GM10248 (cell line): ENCODE measurements at regions of chr12 and their contacts with region 1.

Region 1: DNA sequence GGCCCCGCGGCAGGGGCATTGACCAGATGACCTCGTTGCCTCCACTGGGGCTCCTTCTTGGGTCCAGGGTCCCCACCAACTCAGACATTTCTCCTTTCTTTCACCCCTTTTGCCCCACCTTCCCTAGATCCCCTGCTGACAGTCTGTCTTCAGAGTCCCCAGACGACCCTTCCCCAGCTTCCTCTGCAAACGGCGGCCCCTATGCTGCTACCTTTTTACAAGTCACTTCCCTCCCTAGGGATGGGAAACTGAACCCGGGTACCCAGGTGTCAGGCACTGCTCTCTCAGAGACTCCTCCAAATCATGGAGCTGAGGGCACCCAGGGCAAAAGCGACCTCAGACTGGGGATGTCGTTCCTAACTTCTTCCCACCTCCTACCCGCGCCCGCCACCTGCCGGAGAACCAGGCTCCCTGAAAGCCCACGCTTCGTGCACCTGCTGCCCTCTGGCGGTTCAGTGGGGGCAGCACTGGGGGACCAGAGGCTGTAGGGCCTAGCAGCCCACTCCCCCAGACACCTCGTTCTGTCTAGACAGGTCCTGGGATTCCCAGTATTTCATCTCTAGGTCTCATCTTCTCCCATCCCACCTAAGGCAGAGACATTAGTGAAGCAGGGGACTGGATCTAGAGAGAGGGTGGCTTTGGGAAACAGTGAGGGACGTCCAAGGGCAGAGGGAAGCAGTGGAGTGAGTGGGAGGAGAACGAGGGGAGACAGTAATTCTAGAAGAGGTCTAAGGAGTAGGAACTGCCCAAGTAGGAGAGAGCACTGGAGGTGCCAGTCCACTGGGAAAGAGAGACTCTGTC is 4.9 kb downstream of the ZNF385A start:
- DNase-seq: peak; percentile 93
- CTCF ChIP-seq: peak; percentile 100

Region 2: GRCh38 chr12:53984901-53985709 is 394.5 kb before region 1 on chr12 and contains the start of gene HOXC10:
- CTCF ChIA-PET with region 1: no interaction called
- POLR2A ChIA-PET with region 1: no interaction called
- DNase-seq: peak; percentile 87
- CTCF ChIP-seq: peak; percentile 71

Region 3: GRCh38 chr12:54207484-54208294 is 171.9 kb before region 1 on chr12:
- CTCF ChIA-PET with region 1: interaction called, 13 read pairs
- POLR2A ChIA-PET with region 1: no interaction called
- DNase-seq: peak; percentile 84
- CTCF ChIP-seq: peak; percentile 99

Region 4: DNA sequence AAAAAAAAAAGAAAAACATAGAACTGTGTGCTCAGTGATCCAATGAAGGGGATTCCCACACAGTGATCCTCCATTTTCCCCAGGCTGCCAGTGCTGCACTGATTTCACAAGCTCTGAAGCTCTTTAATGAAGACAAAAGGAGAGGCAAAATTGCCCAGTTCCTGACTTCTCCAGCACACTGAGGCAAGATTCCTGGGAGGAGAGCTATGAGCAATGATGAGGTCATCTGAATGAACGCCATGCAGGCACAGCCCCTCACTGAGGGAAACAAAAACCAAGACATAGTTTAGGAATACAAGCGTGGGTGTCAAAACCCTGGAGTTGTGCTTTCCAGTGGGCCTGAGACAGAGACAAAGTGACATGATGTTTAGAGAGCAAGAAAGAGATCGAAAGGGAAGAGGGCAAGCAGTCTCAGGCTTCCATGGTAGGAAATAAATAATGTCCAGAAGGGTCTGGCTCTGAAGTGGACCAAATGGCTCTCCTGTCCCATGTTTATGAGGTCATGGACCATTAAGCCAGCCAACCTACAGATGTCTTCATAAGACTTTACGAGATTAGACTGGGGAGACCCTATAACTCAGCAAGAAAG is 149.9 kb before region 1 on chr12:
- CTCF ChIA-PET with region 1: interaction called, 12 read pairs
- POLR2A ChIA-PET with region 1: no interaction called
- DNase-seq: no peak
- CTCF ChIP-seq: no peak

Region 5: GRCh38 chr12:54285150-54286041 is 94.2 kb before region 1 on chr12:
- CTCF ChIA-PET with region 1: interaction called, 14 read pairs
- POLR2A ChIA-PET with region 1: interaction called, 3 read pairs
- DNase-seq: no peak
- CTCF ChIP-seq: peak; percentile 5

Region 6: DNA sequence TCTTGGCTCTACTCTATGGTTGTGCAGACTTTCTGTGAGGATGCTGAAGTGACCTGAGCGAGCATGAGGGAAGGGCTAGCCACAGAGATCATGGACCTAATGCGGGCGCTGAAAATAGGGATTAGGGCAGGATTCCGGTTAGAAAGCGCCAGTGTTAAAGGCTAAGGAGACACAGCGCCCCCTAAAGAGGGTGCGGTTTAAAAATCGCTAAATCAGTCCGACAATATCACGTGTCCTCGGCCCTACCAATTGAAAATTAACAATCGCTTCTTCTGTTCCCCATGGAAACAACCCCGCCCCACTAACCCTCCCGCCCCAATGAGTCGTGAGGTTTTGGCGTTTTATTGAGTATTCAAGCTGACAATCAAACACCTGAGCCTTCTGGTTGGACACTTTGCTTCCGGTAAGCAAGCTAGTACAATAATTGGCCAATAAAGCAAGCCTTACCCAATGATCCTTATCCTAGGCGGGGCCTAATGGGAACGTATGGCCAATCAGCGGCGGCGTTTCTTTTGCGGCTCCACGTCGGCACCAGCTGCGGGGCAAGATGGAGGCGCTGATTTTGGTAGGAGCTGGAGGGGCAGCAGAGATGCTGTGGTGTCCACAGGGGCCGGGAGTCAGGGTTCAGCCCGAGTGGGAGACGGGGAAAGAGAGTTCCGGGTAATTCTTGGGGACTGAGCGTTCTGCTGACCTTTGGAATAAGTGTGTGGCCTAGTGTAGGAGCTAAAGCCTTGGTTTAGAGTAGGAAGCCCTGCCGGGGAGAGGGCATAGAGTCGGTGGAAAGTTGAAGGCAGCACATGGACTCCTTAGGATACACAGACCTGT is 54.8 kb before region 1 on chr12 and contains the start of gene COPZ1:
- CTCF ChIA-PET with region 1: interaction called, 14 read pairs
- POLR2A ChIA-PET with region 1: interaction called, 3 read pairs
- DNase-seq: peak; percentile 92
- CTCF ChIP-seq: peak; percentile 72

Region 7: DNA sequence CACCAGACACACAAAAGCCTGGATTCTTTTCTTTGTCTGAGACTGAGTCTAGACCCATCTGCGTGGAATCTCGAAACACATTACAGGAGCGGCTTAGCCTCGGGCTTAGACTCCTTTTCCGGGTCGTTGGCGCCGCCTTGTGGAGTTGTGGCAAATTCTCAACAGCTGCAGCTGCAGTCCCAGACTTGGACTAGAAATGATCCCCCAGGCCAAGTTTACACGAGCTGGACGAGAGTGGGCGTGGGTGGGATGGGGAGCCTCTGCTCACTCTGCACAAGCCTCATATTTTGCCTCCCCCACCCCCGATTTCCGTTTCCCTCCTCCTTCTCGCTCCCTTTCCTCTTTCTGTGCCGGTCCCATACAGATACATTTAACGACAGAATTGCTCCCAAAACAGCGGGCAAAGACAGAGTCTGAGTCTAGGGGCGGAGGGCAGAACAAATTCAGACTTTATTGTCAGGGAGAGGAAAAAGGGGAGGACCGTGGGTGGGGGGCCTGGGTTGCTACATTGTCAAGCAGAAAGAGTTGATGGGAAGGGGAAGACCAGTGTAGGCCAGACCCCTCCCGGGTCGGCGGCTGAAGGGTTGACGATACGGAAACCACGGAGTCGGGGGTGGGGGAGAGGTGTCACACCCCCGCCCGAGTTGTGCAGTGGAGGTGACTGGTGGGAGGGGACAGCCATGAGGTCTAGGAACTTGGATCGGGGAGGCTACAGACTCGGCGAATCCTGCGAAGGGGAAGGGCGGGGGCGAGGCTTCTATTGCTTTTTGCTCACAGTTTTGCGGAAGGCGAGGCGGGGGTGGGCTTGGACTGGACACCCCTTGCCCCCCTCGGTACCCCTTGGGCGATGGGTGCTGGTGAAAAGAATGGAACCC is 10.7 kb before region 1 on chr12:
- CTCF ChIA-PET with region 1: interaction called, 74 read pairs
- POLR2A ChIA-PET with region 1: no interaction called
- DNase-seq: peak; percentile 82
- CTCF ChIP-seq: peak; percentile 96